GM12878 (cell line): ENCODE measurements at regions of chr6 and their contacts with region 1.

Region 1: DNA sequence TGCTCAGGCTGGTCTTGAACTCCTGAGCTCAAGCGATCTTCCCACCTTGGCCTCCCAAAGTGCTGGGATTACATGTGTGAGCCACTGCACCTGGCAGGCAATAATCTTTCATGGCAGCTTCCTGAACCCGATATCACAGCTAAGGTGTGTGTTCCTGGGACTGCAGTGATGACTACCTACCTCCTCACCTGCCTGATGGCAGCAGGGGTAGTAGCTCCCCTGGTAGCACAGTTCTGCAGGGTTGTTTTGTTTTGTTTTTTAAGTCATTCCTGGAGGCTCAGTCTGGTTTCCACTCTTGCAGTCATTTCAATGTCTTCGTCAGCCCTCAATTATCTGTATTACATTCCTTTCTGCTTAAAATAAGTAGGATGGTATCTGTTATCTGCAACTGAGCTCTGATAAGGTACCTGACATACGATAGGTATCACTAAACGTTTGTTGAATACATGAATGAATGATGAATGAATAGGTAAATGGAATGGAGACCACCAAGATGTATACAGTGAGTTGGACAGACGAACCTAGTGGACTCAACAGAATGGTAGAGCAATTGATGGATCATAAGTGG is 7.3 kb upstream of the CLPSL2 start:
- DNase-seq: no peak
- ATAC-seq: no peak
- H3K4me3 ChIP-seq: no peak overlapping the region
- H3K27ac ChIP-seq: no peak overlapping the region
- H3K4me1 ChIP-seq: peaks cover 11% of the 10 kb centered on the region
- H3K27me3 ChIP-seq: peaks cover 0 to under 1% of the 10 kb centered on the region in 2 experiments; a peak in 1 of 4 replicates
- CTCF ChIP-seq: no peak
- EP300 ChIP-seq: no peak
- POLR2A ChIP-seq: no peak
- RAD21 ChIP-seq: no peak

Region 2: GRCh38 chr6:35757456-35758123 is 11.5 kb before region 1 on chr6:
- CTCF ChIA-PET with region 1: interaction called, 16 read pairs
- POLR2A ChIA-PET with region 1: no interaction called
- RAD21 ChIA-PET with region 1: interaction called, 4 read pairs
- SMC1A ChIA-PET with region 1: interaction called, 3 read pairs
- in situ Hi-C with region 1: no loop called
- intact Hi-C with region 1: no loop called
- DNase-seq: no peak
- ATAC-seq: peak; percentile 87
- H3K4me3 ChIP-seq: no peak overlapping the region
- H3K27ac ChIP-seq: no peak overlapping the region
- H3K4me1 ChIP-seq: peaks cover 26% of the 10 kb centered on the region
- H3K27me3 ChIP-seq: no peaks in the 10 kb centered on the region
- CTCF ChIP-seq: peak; percentile 38 to 66 (median 46); a peak in 4 of 6 replicates
- EP300 ChIP-seq: no peak
- POLR2A ChIP-seq: no peak
- RAD21 ChIP-seq: peak; percentile 44